ENCODE measurements at regions of chr1 and their contacts with region 1.

Region 1: DNA sequence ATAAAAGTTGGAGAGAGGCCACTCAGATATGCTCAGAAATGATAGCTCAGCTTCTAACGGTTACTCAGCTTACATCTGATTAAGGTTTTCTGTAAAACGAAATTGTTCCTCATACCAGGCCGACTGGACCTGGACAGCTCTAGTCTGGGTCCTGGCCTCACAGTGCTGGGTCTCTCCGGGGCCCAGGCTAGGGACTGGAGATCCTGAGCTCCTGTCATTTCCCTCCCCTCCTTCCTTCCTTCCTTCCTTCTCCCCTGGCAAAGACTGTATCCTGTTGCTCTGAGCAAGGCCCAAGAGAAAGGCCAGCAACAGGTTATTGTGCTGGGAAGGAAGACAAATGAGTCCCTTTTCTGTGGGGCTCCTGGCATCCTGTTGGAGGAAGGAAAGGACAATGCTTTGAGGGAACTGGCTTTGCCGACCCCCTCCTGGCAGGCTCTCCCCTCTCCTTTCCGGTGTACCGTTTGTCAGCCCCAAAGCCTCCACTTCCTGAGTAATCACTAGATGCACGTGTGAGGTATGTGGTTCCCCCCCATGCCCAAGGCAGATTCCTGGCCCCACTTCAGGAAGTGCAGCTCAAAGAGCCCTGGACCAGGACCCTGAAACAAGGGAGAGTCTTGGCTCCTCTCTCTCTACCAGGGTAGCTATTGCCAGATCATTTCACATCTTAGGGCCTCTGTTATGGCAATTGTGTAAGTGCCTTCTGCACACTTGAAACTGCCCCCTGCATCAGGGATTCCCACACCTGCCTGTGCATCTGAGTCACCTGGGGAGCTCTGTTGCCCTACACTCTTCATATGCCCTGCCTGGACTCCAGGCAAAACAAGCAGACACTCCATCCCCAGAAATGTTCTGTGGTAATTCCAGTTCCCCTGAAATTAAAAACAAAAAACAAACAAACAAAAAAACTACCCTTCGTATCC is 212.7 kb upstream of the FGGY start:
- DNase-seq: no peak
- H3K4me3 ChIP-seq: no peak overlapping the region
- H3K27ac ChIP-seq: peak overlapping the region in 1 of 3 donors; percentile 21
- H3K4me1 ChIP-seq: peaks cover 0 to 12% of the 10 kb centered on the region in 2 donors
- H3K27me3 ChIP-seq: no peaks in the 10 kb centered on the region
- CTCF ChIP-seq: no peak
- POLR2A ChIP-seq: no peak

Region 2: DNA sequence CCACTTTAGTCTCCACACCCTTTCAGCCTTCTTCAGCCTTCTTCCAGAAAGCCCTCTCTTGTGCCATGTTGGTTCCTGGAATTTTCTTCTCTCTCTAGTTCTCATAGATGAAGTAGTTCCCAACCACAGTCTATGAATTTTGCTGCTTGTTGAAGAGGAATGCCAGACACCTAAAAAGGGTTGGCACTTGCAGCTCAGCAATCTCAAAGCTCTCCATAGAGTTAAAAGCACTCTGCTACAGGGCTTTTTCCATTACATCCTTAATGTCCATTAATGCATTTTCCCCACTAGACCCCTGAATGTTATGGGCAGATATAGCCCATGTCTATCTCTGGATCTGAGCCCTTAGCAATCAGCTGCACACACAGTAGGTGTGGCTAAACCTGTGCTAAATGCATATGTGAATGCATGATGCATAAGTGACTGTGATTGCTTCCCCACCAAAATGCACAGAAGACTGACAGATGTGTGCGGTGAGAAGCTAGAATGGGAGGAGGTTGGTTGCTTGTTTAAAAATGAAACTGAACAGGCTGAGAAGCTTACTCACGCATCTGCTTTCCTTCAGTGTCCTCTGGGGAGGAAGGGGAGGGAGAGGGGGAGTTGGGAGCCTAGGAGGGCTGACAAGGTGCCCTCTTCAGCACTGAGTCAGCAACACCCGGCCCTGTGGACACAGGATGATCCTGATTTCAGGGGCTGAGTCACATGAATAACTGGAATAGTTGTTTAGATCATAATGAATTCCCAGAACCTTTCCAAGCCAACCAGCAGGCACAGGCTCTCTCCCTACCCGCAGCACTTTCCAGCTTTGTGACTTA is 66.6 kb after region 1 on chr1:
- intact Hi-C with region 1: loop called (anchors 10 kb)
- DNase-seq: peak; percentile 41 to 58
- H3K4me3 ChIP-seq: no peak overlapping the region
- H3K27ac ChIP-seq: peak overlapping the region; percentile 18 to 44 (median 19)
- H3K4me1 ChIP-seq: peaks cover 0 to 23% of the 10 kb centered on the region in 2 donors
- H3K27me3 ChIP-seq: no peaks in the 10 kb centered on the region
- CTCF ChIP-seq: no peak
- POLR2A ChIP-seq: no peak